AG04450 (cell line): ENCODE measurements at regions of chr18 and their contacts with region 1.

Region 1: GRCh38 chr18:23166891-23167541 is 31.7 kb downstream of the CABLES1 start:
- DNase-seq: no peak
- H3K4me3 ChIP-seq: no peak overlapping the region
- H3K27ac ChIP-seq: no peak overlapping the region
- H3K27me3 ChIP-seq: no peaks in the 10 kb centered on the region
- CTCF ChIP-seq: no peak

Region 2: DNA sequence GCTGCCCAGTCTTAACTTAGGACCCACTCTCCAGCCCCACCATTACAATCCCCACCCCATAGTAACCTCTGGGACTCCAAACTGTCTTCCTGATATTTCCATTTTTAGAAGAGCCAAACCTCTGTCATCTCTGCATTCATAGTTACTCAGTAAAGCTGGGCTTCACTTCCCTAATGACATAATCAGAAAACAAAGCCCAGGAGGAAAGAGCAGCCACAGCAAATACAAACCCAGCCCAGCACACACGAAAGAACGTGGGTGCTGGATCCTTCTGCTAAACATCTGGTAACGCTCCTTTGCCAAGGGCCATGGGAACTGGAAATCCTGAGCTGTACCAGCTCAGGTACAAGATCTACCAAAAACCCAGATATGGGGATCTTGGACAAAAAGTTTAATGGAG is 249.3 kb after region 1 on chr18:
- CTCF ChIA-PET with region 1: no interaction called
- POLR2A ChIA-PET with region 1: interaction called, 11 read pairs
- DNase-seq: no peak
- H3K4me3 ChIP-seq: no peak overlapping the region
- H3K27ac ChIP-seq: no peak overlapping the region
- H3K27me3 ChIP-seq: no peaks in the 10 kb centered on the region
- CTCF ChIP-seq: no peak